ENCODE measurements at regions of chr1 and their contacts with region 1.

Region 1: DNA sequence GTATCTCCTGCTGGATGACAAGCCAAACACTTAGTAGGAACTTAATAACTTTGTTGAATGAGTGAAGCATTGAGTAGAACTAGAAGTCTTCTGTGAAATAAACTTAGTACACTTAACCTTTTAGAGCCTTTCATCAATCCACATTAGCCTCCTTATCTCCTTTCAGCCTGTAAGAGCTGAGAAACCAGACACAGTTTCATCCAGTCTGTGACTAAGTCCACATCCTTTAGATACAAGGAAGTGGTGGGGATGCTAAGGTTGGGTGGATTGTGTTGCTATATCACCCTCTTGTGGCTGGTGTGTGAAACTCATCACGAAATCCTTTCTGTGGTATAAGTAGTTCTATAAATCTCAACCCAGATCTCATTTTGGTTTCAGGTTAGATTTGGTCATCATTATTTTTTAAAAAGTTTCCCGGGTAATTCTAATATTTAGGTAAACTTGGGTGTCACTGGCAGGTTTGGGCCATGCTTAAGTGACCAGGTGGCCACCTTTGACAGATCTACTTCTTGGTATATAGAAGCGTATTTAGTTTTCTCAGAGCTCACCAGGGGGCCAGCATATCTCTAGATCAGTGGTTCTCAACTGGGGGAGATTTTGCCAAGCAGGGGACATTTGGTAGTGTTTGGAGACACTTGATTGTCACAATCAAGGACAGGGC is 27.8 kb upstream of the CD84 start:
- DNase-seq: peak; percentile 70
- H3K4me3 ChIP-seq: no peak overlapping the region
- H3K27ac ChIP-seq: no peak overlapping the region
- H3K4me1 ChIP-seq: no peaks in the 10 kb centered on the region
- H3K27me3 ChIP-seq: peaks cover 2% of the 10 kb centered on the region
- CTCF ChIP-seq: peak; percentile 78 to 79

Region 2: DNA sequence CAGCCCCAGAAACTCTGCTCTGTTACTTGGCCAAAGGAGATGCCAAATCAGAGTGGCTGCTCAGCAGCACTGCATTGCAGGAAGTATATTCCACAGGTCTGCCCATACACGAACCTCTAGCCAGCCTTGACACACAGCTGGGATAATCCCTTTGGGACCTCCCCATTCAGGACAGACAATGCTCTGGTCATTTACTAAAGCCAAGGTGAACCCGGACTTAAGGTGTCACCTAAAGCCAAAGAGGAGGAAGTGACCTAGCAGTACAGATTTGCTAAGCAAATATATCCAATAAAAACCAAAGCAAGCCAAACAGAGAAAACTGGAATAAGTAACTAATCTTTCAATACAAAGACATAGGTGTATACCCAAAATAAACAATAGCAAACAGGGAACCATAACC is 291.8 kb before region 1 on chr1:
- CTCF ChIA-PET with region 1: no interaction called
- dilution Hi-C with region 1: no loop called
- in situ Hi-C with region 1: no loop called
- intact Hi-C with region 1: no loop called
- DNase-seq: no peak
- H3K4me3 ChIP-seq: no peak overlapping the region
- H3K27ac ChIP-seq: no peak overlapping the region
- H3K4me1 ChIP-seq: no peaks in the 10 kb centered on the region
- H3K27me3 ChIP-seq: no peaks in the 10 kb centered on the region
- CTCF ChIP-seq: no peak

Region 3: DNA sequence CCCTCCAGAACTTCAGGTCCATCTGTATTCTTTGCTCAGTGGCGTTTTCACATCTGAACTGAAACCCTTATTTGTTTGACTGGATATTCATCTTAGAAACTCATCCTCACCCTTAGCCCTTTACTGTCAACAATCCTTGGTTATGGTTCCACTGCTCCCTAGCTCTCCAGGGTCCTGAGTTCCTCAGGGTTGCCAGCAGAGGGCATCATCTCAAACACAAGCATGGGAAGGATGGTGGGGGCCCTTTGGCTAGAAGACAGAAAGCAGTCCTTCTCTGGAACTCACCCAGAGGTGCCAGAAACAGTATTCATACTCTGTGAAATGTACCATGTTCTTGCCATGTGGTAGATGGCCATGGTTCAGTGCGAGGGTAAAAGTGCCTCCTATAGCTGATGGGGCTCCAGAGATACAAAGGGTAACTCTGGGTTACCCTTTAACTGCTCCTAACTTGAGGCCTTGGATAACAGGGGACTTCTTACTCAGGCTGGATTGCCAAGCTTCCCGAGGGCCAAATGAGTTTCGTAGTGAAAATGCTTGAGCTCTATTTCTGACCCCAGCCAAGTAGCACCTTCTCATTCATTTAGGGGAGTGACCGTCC is 252.7 kb before region 1 on chr1:
- CTCF ChIA-PET with region 1: interaction called, 3 read pairs
- dilution Hi-C with region 1: no loop called
- in situ Hi-C with region 1: no loop called
- intact Hi-C with region 1: loop called (anchors 2 kb)
- DNase-seq: no peak
- H3K4me3 ChIP-seq: no peak overlapping the region
- H3K27ac ChIP-seq: no peak overlapping the region
- H3K4me1 ChIP-seq: no peaks in the 10 kb centered on the region
- H3K27me3 ChIP-seq: no peaks in the 10 kb centered on the region
- CTCF ChIP-seq: peak; percentile 57 to 63

Region 4: DNA sequence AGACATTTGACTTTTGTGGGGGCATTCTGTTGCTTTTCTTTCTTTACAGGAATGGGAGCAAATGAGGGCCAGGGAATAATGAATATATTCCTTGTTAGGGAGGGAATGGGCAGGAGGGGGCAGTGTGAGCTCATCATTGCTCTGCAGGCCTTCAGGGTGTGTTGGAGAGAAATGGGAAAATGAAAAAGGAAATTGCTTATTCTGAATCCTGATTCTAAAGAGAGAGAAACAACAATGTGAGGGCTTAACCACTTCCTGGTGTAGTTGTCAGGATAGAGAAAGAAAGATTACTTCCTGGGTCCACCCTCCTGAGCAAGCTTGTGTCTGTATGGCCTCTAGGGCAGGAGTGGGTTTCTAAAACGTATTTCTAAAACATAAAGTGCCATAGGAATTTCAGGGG is 178.5 kb before region 1 on chr1:
- CTCF ChIA-PET with region 1: no interaction called
- dilution Hi-C with region 1: no loop called
- in situ Hi-C with region 1: loop called (anchors 5 kb)
- intact Hi-C with region 1: loop called (anchors 1 kb)
- DNase-seq: peak; percentile 31
- H3K4me3 ChIP-seq: no peak overlapping the region
- H3K27ac ChIP-seq: no peak overlapping the region
- H3K4me1 ChIP-seq: no peaks in the 10 kb centered on the region
- H3K27me3 ChIP-seq: peaks cover 3% of the 10 kb centered on the region
- CTCF ChIP-seq: peak; percentile 42 to 63

Region 5: DNA sequence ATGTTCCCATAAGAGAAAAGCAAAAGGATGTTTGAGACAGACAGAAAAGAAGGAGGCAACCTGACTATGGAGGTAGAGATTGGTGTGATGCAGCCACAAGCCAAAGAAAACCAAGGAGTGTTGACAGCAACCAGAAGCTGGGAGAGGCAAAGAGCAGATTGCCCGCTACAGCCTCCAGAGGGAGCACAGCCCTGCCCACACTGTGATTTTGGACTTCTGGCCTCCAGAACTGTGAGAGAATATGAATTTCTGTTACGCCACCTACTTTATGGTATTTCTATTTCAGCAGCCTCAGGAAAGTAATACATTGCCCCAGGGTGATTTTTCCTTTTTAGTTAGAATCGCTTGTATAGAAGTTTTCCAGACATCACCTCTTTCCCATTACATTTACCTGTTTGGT is 112.5 kb before region 1 on chr1:
- CTCF ChIA-PET with region 1: no interaction called
- dilution Hi-C with region 1: no loop called
- in situ Hi-C with region 1: no loop called
- intact Hi-C with region 1: loop called (anchors 1 kb)
- DNase-seq: no peak
- H3K4me3 ChIP-seq: no peak overlapping the region
- H3K27ac ChIP-seq: no peak overlapping the region
- H3K4me1 ChIP-seq: no peaks in the 10 kb centered on the region
- H3K27me3 ChIP-seq: no peaks in the 10 kb centered on the region
- CTCF ChIP-seq: peak; percentile 20 to 45

Region 6: DNA sequence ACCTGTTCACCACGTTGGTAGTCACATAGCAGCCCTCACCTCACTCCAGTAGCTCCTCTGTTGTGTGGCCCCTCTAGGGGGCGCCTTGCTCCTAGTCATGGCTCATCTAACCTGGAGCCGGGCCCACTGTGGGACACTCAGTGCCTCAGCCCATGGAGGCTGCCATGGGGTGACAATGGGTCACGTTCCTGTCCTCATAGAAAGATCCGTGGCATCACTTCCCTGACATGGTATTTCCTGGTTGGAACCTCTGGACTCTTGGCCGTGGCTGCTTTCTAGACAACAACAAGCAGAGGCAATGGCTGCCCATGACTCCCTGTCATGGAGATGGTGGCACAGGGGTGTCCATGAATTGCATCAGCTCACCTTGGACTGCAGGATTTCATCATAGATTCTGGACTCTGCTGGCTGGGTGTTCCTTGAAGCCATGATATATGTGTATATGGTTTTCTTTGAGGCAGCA is 56.5 kb before region 1 on chr1:
- CTCF ChIA-PET with region 1: no interaction called
- dilution Hi-C with region 1: no loop called
- in situ Hi-C with region 1: no loop called
- intact Hi-C with region 1: loop called (anchors 2 kb)
- DNase-seq: no peak
- H3K4me3 ChIP-seq: no peak overlapping the region
- H3K27ac ChIP-seq: no peak overlapping the region
- H3K4me1 ChIP-seq: no peaks in the 10 kb centered on the region
- H3K27me3 ChIP-seq: no peaks in the 10 kb centered on the region
- CTCF ChIP-seq: no peak

Region 7: GRCh38 chr1:160708801-160709200 is 101.7 kb after region 1 on chr1:
- CTCF ChIA-PET with region 1: no interaction called
- dilution Hi-C with region 1: no loop called
- in situ Hi-C with region 1: no loop called
- intact Hi-C with region 1: no loop called
- DNase-seq: no peak
- H3K4me3 ChIP-seq: no peak overlapping the region
- H3K27ac ChIP-seq: no peak overlapping the region
- H3K4me1 ChIP-seq: no peaks in the 10 kb centered on the region
- H3K27me3 ChIP-seq: peaks cover 3% of the 10 kb centered on the region
- CTCF ChIP-seq: no peak